ENCODE measurements at regions of chr12 and their contacts with region 1.

Region 1: DNA sequence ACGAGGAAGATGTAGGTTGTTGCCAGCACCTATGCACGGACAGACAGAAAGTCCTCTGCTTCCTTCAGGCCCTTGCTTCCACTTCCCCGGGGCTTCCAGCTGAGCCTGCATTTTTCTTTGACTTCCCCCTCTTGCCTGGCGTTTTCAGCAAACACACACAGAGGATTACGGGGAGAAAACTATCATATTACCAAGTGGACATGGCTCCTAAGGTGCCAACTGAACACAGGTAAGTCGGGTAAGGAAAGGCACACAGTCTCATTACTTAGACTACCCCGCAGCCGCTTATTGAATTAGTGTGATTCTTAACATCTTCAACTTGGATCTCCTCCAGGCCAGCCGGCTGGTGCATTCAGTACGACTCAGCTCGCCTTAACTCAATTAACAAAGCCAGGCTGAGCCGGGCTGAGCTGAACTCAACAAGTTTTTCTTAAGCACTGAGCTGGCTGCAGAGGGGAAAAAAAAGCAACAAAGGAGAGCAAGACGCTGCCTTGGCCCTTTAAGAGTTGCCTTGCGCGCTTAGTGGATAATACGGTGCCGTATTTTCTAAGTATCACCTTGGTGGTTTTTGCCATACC is 19.2 kb upstream of the MAP1LC3B2 start:
- H3K4me3 Mint-ChIP-seq: peak overlapping the region; percentile 40
- H3K27ac Mint-ChIP-seq: peak overlapping the region; percentile 88
- H3K4me1 Mint-ChIP-seq: peaks cover 56% of the 10 kb centered on the region
- H3K27me3 Mint-ChIP-seq: no peaks in the 10 kb centered on the region

Region 2: DNA sequence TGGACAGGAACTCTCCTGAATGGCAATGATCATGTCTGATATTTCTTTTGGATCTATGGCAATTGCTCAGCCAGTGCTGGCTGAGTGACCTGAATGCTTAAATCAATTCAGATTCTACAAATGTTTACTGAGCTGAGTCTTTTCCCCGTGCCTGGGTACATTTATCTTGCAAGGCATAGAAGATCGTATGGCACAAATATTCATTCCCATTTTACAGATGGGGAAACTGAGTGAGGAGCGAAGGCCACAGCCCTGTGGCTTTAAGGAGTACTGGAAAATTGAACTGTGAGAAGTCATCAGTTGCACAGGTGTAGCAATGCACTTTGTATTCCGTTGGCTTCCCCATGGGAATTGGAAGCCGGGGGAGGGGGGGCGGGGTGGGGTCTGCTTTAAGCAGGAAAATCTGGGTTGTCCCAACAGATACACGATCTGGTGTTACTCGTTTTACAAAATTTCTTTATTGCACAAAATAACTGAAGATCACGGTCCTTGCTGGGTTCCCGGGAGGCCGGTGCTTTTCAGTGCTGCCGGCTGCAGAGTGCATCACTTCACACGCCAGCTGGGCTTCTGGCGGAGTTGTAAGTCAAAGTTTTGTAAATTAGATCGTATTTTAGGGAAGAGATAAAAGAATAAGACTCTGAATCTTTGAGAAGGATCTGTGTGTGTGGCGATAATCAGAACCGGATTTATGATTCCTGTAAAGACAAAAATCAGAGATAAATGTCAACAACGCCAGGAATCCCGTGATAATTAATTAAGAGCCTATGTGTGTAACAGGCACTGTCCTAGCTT is 55.8 kb before region 1 on chr12:
- intact Hi-C with region 1: no loop called
- H3K4me3 Mint-ChIP-seq: no peak overlapping the region
- H3K27ac Mint-ChIP-seq: no peak overlapping the region
- H3K4me1 Mint-ChIP-seq: no peaks in the 10 kb centered on the region
- H3K27me3 Mint-ChIP-seq: peaks cover 13% of the 10 kb centered on the region

Region 3: GRCh38 chr12:116559162-116559935 is 19.4 kb after region 1 on chr12 and contains the start of gene MAP1LC3B2:
- intact Hi-C with region 1: loop called (anchors 2 kb)
- H3K4me3 Mint-ChIP-seq: peak within 1 kb of the TSS; percentile 61
- H3K27ac Mint-ChIP-seq: peak within 1 kb of the TSS; percentile 96
- H3K4me1 Mint-ChIP-seq: peaks cover 53% of the 10 kb centered on the region
- H3K27me3 Mint-ChIP-seq: peaks cover 3% of the 10 kb centered on the region

Region 4: GRCh38 chr12:117241697-117242096 is 701.7 kb after region 1 on chr12:
- intact Hi-C with region 1: no loop called
- H3K4me3 Mint-ChIP-seq: no peak overlapping the region
- H3K27ac Mint-ChIP-seq: no peak overlapping the region
- H3K4me1 Mint-ChIP-seq: no peaks in the 10 kb centered on the region
- H3K27me3 Mint-ChIP-seq: no peaks in the 10 kb centered on the region